IMR-90 (cell line): ENCODE measurements at regions of chr7 and their contacts with region 1.

Region 1: DNA sequence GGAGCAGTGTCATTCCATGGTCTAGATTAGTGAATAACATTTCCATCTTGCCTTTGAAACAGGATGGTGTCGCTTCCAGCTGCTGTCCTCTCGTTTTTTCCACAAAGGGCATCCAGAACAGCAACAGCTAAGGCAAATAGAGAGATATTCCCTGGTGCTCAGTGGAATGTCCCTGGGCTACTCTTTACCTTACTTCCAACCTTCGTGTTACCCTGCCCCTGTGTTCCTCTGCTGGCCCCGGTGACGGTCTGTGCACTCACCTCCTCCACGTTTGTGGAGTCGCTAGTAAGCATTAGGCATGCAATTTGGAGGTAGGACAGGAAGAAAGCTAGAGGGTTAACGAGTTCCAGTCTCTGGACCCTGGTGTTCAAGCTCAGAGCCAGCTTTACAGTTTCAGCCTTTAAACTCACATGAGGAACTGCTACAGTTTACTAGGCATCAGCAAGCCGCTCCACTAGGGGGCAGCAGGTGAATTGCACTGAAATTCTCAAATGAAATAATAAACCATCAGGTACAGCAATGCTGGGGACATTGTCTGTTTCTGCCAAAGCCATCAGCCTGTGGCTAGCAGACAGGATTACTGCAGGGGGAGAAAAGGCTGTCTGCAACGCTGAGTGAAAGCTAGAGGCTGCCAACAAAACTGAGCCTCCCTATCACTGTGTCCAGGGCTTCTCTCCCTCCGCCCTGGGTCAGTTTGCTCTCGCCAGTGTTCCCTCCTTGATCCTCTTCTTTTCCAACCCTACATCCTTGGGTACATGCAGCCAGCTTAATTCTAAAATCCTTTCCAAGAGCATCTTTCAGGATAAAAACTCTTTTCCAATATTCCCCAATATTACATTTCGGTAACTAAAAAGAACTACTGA is 9.0 kb downstream of the MRPL32 start:
- DNase-seq: peak; percentile 66
- ATAC-seq: peak; percentile 87
- H3K4me3 ChIP-seq: no peak overlapping the region
- H3K27ac ChIP-seq: no peak overlapping the region
- H3K4me1 ChIP-seq: no peaks in the 10 kb centered on the region
- H3K27me3 ChIP-seq: no peaks in the 10 kb centered on the region
- CTCF ChIP-seq: peak; percentile 90
- POLR2A ChIP-seq: no peak
- RAD21 ChIP-seq: peak; percentile 85

Region 2: GRCh38 chr7:43083106-43083505 is 141.9 kb after region 1 on chr7:
- CTCF ChIA-PET with region 1: no interaction called
- POLR2A ChIA-PET with region 1: no interaction called
- dilution Hi-C with region 1: no loop called
- in situ Hi-C with region 1: no loop called
- intact Hi-C with region 1: no loop called
- DNase-seq: no peak
- ATAC-seq: no peak
- H3K4me3 ChIP-seq: no peak overlapping the region
- H3K27ac ChIP-seq: no peak overlapping the region
- H3K4me1 ChIP-seq: no peaks in the 10 kb centered on the region
- H3K27me3 ChIP-seq: peaks cover 7% of the 10 kb centered on the region
- CTCF ChIP-seq: no peak
- POLR2A ChIP-seq: no peak
- RAD21 ChIP-seq: no peak

Region 3: DNA sequence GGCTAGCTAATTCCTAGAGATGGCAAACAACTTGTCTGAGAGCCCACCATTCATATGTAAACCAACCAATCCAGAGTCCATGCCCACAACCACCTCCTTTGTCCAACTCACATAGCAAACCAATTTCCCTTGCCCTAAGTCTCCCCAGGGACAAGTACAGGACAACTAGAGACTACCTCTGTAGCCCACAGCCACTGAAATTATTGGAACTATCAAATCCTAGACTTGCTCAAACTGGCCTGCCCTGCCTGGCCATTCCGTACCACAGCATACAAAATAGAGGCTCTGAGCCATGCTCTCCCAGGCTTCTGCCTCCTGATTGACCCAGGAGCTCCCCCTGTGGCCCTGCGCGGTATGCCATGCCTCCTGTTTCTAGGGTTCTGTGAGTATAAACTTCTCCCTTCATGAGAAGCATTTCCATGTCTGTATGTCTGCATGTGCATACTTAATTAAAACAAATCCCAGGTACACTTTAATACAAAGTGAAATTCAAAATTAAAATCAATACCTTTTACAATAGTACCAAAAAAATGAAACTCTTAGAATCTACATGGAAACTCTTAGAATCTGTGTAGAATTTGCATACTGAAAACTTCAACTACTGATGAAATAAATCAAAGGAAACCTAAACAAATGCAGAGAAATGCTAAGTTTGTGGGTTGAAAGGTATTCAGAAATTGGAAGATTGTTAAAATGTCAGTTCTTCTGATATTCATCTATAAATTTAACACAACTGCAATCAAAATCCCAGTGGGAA is 167.2 kb after region 1 on chr7:
- CTCF ChIA-PET with region 1: interaction called, 8 read pairs
- POLR2A ChIA-PET with region 1: no interaction called
- dilution Hi-C with region 1: no loop called
- in situ Hi-C with region 1: no loop called
- intact Hi-C with region 1: loop called (anchors 5 kb)
- DNase-seq: peak; percentile 39
- ATAC-seq: peak; percentile 87
- H3K4me3 ChIP-seq: no peak overlapping the region
- H3K27ac ChIP-seq: no peak overlapping the region
- H3K4me1 ChIP-seq: peaks cover 2% of the 10 kb centered on the region; the same call in 1 of the 2 replicates
- H3K27me3 ChIP-seq: peaks cover 35% of the 10 kb centered on the region
- CTCF ChIP-seq: peak; percentile 78
- POLR2A ChIP-seq: no peak
- RAD21 ChIP-seq: peak; percentile 63

Region 4: DNA sequence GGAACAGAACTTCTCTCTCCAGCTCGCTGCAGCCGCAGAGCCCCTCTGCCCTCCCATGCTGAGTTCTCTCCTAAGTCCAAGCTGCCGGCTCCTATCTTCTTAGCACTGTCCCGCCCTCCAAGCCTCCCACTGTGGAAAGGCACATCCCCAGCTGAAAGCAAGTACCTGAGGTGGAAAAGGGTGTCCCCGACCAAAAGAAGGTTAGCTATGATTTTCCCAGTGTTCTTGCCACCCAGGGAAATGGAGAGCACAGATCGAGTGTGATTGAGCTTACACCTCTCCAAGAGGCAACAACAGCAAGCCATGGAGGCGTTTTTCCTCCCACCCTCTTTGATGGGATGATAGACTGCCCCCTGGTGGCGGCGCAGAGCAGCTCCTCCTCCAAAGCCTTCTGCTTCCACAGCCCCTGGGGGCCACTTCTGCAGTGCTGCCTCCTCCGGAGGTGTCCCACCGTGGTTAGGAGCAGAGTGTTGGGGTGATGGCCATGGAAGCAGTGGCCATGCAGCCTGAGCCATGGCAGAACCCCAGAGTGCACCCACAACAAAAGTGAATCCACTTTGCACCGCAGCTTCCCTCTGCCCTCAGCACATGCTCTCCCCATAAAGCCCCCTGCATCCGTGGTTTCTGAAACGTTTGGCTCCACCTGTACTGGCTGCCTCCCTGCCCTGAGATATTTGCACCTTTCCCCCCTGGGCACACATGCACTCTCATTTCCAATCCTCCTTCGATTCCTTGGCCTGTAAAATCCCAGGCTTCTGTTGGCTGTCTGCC is 498.6 kb after region 1 on chr7:
- CTCF ChIA-PET with region 1: interaction called, 6 read pairs
- POLR2A ChIA-PET with region 1: no interaction called
- dilution Hi-C with region 1: no loop called
- in situ Hi-C with region 1: no loop called
- intact Hi-C with region 1: loop called (anchors 1 kb)
- DNase-seq: peak; percentile 47
- ATAC-seq: peak; percentile 88
- H3K4me3 ChIP-seq: no peak overlapping the region
- H3K27ac ChIP-seq: no peak overlapping the region
- H3K4me1 ChIP-seq: no peaks in the 10 kb centered on the region
- H3K27me3 ChIP-seq: 0 out of 2 replicates have a peak, but pooled peaks cover 2% of the 10 kb centered on the region
- CTCF ChIP-seq: peak; percentile 65
- POLR2A ChIP-seq: no peak
- RAD21 ChIP-seq: peak; percentile 57

Region 5: DNA sequence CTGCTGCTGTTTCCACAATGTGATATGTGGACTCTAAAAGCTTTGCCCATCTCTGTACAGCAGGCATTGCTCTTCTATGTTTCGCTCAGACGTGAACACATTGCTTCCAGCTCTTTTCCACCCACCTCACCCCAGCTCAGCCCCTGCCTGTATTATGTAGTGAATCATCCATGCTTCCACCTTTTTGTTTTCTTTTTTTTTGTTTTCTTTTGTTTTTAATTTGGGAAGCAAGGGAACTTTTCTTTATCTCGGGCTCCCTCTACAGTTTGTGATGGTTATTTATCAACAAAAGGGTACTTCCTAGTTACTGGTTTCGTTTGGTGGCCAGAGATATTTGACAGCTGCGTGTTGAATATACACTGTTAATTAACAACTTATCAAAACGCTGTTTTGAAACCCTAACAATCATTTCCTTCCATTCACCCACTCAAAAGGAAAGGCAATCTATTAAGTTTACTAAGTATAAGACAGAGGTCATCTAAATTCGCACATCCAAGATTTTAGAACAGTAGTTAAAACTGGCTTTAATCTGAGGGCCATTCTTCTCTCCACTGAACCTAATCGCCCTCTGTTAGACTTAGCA is 513.8 kb after region 1 on chr7:
- CTCF ChIA-PET with region 1: interaction called, 3 read pairs
- POLR2A ChIA-PET with region 1: no interaction called
- dilution Hi-C with region 1: no loop called
- in situ Hi-C with region 1: no loop called
- intact Hi-C with region 1: loop called (anchors 2 kb)
- DNase-seq: peak; percentile 42
- ATAC-seq: peak; percentile 63
- H3K4me3 ChIP-seq: no peak overlapping the region
- H3K27ac ChIP-seq: no peak overlapping the region
- H3K4me1 ChIP-seq: no peaks in the 10 kb centered on the region
- H3K27me3 ChIP-seq: peaks cover 5% of the 10 kb centered on the region
- CTCF ChIP-seq: peak; percentile 54
- POLR2A ChIP-seq: no peak
- RAD21 ChIP-seq: peak; percentile 48

Region 6: DNA sequence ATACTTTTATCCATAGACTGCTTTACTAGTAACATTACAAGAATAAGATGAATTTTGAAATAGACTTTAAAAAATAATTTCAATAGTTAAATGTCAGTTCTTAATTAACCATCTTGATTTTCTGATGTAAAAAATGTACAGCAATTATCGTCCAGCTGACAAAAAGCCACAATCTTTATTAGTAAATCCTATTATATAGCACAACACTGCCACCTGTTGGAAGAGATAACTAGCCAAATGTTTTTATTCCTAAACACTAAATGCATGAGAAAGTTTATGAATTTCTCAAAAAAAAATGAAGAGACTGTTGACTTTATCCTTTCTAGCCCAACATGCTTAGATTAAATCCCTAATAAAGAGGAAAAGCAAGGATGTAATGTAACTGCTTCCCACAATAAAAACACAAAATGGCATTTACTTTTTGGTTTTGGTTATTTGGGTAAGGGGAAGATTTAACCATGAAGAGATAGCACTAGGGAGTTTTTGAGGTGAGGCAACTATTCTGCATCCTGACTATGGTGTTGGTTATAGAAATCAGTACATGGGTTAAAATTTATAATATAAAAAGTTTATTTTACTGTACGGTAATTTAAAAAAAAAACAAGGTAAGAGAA is 780.1 kb after region 1 on chr7:
- CTCF ChIA-PET with region 1: no interaction called
- POLR2A ChIA-PET with region 1: no interaction called
- dilution Hi-C with region 1: no loop called
- in situ Hi-C with region 1: loop called (anchors 10 kb)
- intact Hi-C with region 1: loop called (anchors 2 kb)
- DNase-seq: peak; percentile 71
- ATAC-seq: peak; percentile 46
- H3K4me3 ChIP-seq: no peak overlapping the region
- H3K27ac ChIP-seq: no peak overlapping the region
- H3K4me1 ChIP-seq: peaks cover 3% of the 10 kb centered on the region
- H3K27me3 ChIP-seq: no peaks in the 10 kb centered on the region
- CTCF ChIP-seq: peak; percentile 75
- POLR2A ChIP-seq: no peak
- RAD21 ChIP-seq: peak; percentile 73

Region 7: DNA sequence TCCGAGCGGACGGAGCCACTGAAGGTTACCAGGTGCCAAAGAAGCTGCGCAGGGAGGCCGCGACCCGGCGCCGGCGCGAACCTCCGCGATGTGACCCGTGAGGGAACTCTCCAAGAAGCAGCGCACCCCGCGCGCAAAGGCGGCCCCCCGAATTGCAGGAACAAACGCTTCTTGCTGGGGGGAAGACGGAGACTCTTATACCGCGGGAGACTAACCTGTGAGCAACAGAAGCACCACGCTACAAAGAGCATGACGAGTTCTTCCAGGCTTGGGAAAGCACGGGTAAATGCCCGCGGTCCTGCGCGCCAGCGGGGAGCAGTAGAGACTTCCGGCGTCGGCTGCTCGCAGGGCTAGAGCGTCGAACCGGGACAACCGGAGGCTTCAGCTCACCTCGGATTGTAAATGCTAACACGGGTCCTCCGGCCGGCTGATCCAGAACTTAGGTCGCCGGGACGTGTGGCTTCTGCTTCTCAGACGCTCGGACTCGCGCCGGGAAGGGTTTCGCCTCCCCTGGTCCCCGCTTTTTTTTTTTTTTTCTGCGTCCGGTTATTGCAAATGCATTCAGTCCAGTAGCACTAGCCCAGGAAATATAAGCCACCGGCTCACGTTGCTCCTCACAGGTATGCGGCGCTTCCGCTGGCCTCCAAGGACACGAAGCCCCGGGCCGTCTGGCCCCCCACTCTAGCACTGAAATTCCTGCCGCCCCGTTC is 788.2 kb after region 1 on chr7 and contains the start of gene COA1:
- CTCF ChIA-PET with region 1: no interaction called
- POLR2A ChIA-PET with region 1: no interaction called
- dilution Hi-C with region 1: no loop called
- in situ Hi-C with region 1: loop called (anchors 10 kb)
- intact Hi-C with region 1: no loop called
- DNase-seq: peak; percentile 91
- ATAC-seq: peak; percentile 98
- H3K4me3 ChIP-seq: peak within 1 kb of the TSS; percentile 98
- H3K27ac ChIP-seq: peak within 1 kb of the TSS; percentile 89
- H3K4me1 ChIP-seq: peaks cover 2% of the 10 kb centered on the region; the same call in 1 of the 2 replicates
- H3K27me3 ChIP-seq: no peaks in the 10 kb centered on the region
- CTCF ChIP-seq: no peak
- POLR2A ChIP-seq: peak; percentile 59; the same call in 1 of the 2 replicates
- RAD21 ChIP-seq: peak; percentile 9; the same call in 1 of the 2 replicates
- total RNA-seq, gene COA1: 59.5 and 66.4 TPM in 2 replicates